Breast epithelium (tissue), 4 donors: ENCODE measurements at regions of chr4 and their contacts with region 1.

Region 1: DNA sequence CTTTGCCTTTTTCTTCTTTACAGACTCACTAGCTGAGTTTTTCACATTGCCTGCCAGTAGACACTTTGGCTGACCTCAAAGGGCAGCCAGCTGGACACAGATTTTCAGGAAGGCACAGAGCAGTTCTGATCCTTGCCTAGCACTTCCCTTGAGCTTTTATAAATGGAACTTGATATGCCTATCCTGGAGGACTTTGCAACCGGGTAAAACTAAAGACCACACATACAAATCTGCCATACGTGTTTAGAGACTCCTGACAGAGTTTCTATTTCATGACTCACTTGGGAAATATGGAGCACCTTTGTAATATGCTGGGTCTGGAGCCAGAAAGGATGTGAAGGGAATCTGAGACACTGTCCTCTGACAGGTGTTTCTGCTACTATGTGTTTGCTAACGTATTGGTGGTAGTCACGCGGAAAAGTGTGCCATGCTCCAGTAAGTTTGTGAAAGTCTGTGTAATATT is 56.7 kb upstream of the RASSF6 start:
- DNase-seq: no peak
- H3K4me3 ChIP-seq: no peak overlapping the region
- H3K27ac ChIP-seq: peak overlapping the region in 1 of 2 donors; percentile 7
- H3K4me1 ChIP-seq: no peaks in the 10 kb centered on the region
- H3K27me3 ChIP-seq: no peaks in the 10 kb centered on the region
- CTCF ChIP-seq: no peak
- POLR2A ChIP-seq: no peak

Region 2: DNA sequence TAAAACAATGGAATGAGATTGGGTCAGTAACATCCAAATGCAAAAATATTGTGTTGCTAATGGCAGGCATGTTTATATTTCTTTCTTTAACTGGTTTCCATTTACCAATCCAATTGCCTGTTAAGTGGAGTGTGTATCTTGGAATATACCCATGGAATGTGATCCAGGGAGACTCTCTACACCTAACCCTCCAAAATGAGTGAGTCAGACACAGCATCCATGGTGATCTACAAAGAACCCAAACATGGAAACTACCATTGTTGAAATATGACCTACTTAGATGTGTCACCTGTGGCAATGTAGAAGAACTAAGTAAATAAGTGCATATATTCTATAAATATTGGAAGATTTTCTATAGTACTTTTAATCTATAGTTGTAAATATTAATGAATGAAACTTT is 878.3 kb after region 1 on chr4:
- intact Hi-C with region 1: loop called (anchors 5 kb)
- DNase-seq: no peak
- H3K4me3 ChIP-seq: no peak overlapping the region
- H3K27ac ChIP-seq: no peak overlapping the region
- H3K4me1 ChIP-seq: no peaks in the 10 kb centered on the region
- H3K27me3 ChIP-seq: no peaks in the 10 kb centered on the region
- CTCF ChIP-seq: no peak
- POLR2A ChIP-seq: no peak